H1 (cell line): ENCODE measurements at regions of chr6 and their contacts with region 1.

Region 1: DNA sequence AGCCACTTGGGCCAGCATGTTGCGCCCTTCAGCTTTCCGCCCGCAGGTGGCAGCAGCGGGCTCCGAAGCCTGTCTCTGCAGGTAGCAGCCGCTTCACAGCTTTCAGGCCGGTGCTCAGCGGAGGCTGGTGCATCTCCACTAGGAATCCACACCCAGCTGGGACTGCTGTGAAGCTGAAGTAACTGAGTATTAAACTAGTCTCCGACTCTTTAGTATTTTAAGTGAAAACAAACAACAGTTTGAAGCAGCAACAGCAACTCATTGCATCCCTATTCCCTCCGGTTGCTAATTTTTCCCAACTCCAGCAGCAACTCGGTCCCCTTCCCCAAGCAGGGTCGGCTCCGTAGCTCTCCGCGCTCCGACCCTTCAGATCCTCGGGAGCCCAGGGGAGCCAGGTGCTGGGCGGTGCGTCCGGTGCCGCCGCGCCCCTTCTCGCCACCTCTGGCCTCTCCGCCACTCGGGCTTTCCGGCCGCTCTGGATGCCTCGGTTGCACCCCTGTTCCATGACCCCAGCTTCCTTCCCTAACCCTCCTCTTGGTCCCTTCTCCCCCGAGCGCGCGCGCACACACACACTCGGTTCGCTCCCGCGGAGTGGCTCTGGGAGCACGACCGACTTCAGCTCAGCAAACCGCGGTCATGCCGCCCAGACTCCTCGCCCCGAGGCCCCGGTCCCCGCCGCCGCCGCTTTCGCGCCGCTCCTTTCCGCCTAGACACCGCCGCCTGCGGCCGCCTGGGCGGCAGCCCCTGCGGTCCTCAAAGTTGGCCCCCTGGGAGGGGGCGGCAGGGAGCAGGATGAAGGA is 768 bp upstream of the NKAIN2 start:
- DNase-seq: peak; percentile 69 to 94
- H3K4me3 ChIP-seq: peak overlapping the region; percentile 41 to 92 (median 56)
- H3K27ac ChIP-seq: no peak overlapping the region
- H3K4me1 ChIP-seq: no peaks in the 10 kb centered on the region; a peak in 1 of 7 replicates
- H3K27me3 ChIP-seq: peaks cover 3 to 15% (median 11%) of the 10 kb centered on the region in 4 experiments
- CTCF ChIP-seq: peak; percentile 88 to 92 (median 89)
- EP300 ChIP-seq: no peak
- POLR2A ChIP-seq: no peak
- RAD21 ChIP-seq: peak; percentile 85 to 88

Region 2: GRCh38 chr6:123777563-123777962 is 25.3 kb before region 1 on chr6:
- CTCF ChIA-PET with region 1: interaction called, 11 read pairs
- POLR2A ChIA-PET with region 1: no interaction called
- DNase-seq: no peak
- H3K4me3 ChIP-seq: no peak overlapping the region
- H3K27ac ChIP-seq: no peak overlapping the region
- H3K4me1 ChIP-seq: no peaks in the 10 kb centered on the region
- H3K27me3 ChIP-seq: no peaks in the 10 kb centered on the region
- CTCF ChIP-seq: no peak
- EP300 ChIP-seq: no peak
- POLR2A ChIP-seq: no peak
- RAD21 ChIP-seq: no peak

Region 3: DNA sequence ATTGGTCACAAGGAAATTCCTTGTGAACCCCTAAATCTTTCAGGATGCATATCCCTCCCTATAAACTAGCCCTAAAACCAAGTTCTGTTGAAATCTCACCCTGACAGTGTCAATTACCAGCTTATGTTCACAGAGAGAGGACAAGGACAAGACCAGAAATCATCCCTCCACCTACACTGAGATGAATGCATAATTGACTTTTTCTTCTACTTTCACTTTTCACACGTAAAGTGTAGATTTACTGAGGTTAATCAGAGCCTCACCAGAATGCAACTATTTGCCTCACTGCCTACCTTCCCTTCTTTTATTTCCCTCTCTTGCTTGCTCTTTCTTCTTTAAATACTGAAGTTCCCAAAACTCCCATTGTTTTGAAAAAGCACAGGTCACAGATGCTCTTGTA is 14.6 kb before region 1 on chr6:
- CTCF ChIA-PET with region 1: interaction called, 20 read pairs
- POLR2A ChIA-PET with region 1: no interaction called
- DNase-seq: no peak
- H3K4me3 ChIP-seq: no peak overlapping the region
- H3K27ac ChIP-seq: no peak overlapping the region
- H3K4me1 ChIP-seq: no peaks in the 10 kb centered on the region
- H3K27me3 ChIP-seq: peaks cover 0 to 3% (median 0%) of the 10 kb centered on the region in 4 experiments; a peak in 1 of 7 replicates
- CTCF ChIP-seq: no peak
- EP300 ChIP-seq: no peak
- POLR2A ChIP-seq: no peak
- RAD21 ChIP-seq: no peak

Region 4: GRCh38 chr6:123829302-123829953 is 26.5 kb after region 1 on chr6:
- CTCF ChIA-PET with region 1: no interaction called
- POLR2A ChIA-PET with region 1: no interaction called
- DNase-seq: no peak
- H3K4me3 ChIP-seq: no peak overlapping the region
- H3K27ac ChIP-seq: no peak overlapping the region
- H3K4me1 ChIP-seq: peaks cover 0 to 4% (median 2%) of the 10 kb centered on the region in 4 experiments; a peak in 3 of 7 replicates
- H3K27me3 ChIP-seq: no peaks in the 10 kb centered on the region
- CTCF ChIP-seq: no peak
- EP300 ChIP-seq: no peak
- POLR2A ChIP-seq: no peak
- RAD21 ChIP-seq: no peak

Region 5: GRCh38 chr6:123965894-123966293 is 163.0 kb after region 1 on chr6:
- CTCF ChIA-PET with region 1: interaction called, 24 read pairs
- POLR2A ChIA-PET with region 1: no interaction called
- DNase-seq: peak in 1 of 2 experiments; percentile 44
- H3K4me3 ChIP-seq: no peak overlapping the region
- H3K27ac ChIP-seq: no peak overlapping the region
- H3K4me1 ChIP-seq: no peaks in the 10 kb centered on the region; a peak in 1 of 7 replicates
- H3K27me3 ChIP-seq: no peaks in the 10 kb centered on the region
- CTCF ChIP-seq: peak; percentile 21 to 97 (median 74)
- EP300 ChIP-seq: no peak
- POLR2A ChIP-seq: no peak
- RAD21 ChIP-seq: peak; percentile 76 to 83

Region 6: GRCh38 chr6:124795643-124796463 is 993.0 kb after region 1 on chr6:
- CTCF ChIA-PET with region 1: interaction called, 18 read pairs
- POLR2A ChIA-PET with region 1: no interaction called
- DNase-seq: peak; percentile 10 to 49
- H3K4me3 ChIP-seq: no peak overlapping the region
- H3K27ac ChIP-seq: no peak overlapping the region
- H3K4me1 ChIP-seq: peaks cover 0 to 5% (median 0%) of the 10 kb centered on the region in 4 experiments; a peak in 1 of 7 replicates
- H3K27me3 ChIP-seq: no peaks in the 10 kb centered on the region
- CTCF ChIP-seq: peak; percentile 68 to 79 (median 78)
- EP300 ChIP-seq: no peak
- POLR2A ChIP-seq: no peak
- RAD21 ChIP-seq: peak; percentile 96 to 97